ENCODE measurements at regions of chr14 and their contacts with region 1.

Region 1: GRCh38 chr14:92352158-92352985 is 29.4 kb downstream of the SLC24A4 start:
- DNase-seq: peak; percentile 10 to 71
- H3K4me3 ChIP-seq: no peak overlapping the region
- H3K27ac ChIP-seq: no peak overlapping the region
- H3K4me1 ChIP-seq: no peaks in the 10 kb centered on the region
- H3K27me3 ChIP-seq: no peaks in the 10 kb centered on the region
- CTCF ChIP-seq: peak in 2 of 3 experiments; percentile 67 to 77; a peak in 3 of 4 replicates
- EP300 ChIP-seq: no peak
- POLR2A ChIP-seq: no peak
- RAD21 ChIP-seq: peak; percentile 77 to 78

Region 2: DNA sequence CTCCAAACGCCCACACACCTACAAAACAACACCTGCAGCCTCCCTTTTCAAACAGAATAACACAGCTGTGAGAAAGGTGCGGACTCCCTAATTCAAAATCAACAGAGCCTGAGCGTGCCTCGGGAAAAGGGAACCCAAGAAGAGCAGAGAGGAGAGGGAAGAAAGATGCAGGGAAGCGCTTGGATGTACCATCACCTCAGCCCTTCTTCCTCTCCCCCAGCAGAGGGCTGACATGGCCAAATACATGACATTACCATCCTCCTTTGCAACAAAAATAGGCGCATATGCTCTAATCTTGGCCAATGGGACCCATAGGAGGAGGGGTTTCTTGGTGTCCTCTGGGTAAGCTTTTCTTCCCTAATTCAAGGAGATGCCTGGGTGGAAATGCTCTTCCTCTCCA is 152.6 kb before region 1 on chr14:
- CTCF ChIA-PET with region 1: interaction called, 13 read pairs
- POLR2A ChIA-PET with region 1: no interaction called
- DNase-seq: no peak
- H3K4me3 ChIP-seq: peak overlapping the region in 1 of 4 experiments; percentile 47; a peak in 4 of 8 replicates
- H3K27ac ChIP-seq: no peak overlapping the region
- H3K4me1 ChIP-seq: peaks cover 0 to 10% (median 2%) of the 10 kb centered on the region in 4 experiments; a peak in 3 of 7 replicates
- H3K27me3 ChIP-seq: no peaks in the 10 kb centered on the region; a peak in 3 of 7 replicates
- CTCF ChIP-seq: peak; percentile 17 to 41 (median 23); a peak in 3 of 4 replicates
- EP300 ChIP-seq: no peak
- POLR2A ChIP-seq: no peak
- RAD21 ChIP-seq: peak in 1 of 2 experiments; percentile 44; a peak in 2 of 4 replicates

Region 3: DNA sequence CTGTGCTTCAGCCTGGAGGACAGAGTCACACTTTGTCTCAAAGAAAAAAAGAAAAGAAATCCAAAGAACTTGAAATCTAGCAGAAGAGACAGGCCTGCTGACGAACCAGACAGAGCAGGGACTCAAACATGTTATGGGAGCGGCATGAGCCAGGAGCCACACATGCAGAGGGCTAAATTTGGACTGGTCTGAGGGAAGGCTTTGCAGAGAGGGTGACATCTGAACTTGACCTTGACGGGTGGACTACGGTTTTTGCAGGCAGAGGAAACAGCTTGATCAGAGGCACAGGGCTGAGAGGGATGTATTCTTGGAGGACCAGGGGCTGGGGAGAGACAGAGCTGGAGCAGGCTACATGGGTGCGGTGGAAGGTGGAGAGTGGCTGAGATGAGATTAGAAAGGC is 49.9 kb before region 1 on chr14:
- CTCF ChIA-PET with region 1: interaction called, 11 read pairs
- POLR2A ChIA-PET with region 1: no interaction called
- DNase-seq: no peak
- H3K4me3 ChIP-seq: no peak overlapping the region
- H3K27ac ChIP-seq: no peak overlapping the region
- H3K4me1 ChIP-seq: no peaks in the 10 kb centered on the region
- H3K27me3 ChIP-seq: no peaks in the 10 kb centered on the region
- CTCF ChIP-seq: no peak
- EP300 ChIP-seq: no peak
- POLR2A ChIP-seq: no peak
- RAD21 ChIP-seq: no peak

Region 4: DNA sequence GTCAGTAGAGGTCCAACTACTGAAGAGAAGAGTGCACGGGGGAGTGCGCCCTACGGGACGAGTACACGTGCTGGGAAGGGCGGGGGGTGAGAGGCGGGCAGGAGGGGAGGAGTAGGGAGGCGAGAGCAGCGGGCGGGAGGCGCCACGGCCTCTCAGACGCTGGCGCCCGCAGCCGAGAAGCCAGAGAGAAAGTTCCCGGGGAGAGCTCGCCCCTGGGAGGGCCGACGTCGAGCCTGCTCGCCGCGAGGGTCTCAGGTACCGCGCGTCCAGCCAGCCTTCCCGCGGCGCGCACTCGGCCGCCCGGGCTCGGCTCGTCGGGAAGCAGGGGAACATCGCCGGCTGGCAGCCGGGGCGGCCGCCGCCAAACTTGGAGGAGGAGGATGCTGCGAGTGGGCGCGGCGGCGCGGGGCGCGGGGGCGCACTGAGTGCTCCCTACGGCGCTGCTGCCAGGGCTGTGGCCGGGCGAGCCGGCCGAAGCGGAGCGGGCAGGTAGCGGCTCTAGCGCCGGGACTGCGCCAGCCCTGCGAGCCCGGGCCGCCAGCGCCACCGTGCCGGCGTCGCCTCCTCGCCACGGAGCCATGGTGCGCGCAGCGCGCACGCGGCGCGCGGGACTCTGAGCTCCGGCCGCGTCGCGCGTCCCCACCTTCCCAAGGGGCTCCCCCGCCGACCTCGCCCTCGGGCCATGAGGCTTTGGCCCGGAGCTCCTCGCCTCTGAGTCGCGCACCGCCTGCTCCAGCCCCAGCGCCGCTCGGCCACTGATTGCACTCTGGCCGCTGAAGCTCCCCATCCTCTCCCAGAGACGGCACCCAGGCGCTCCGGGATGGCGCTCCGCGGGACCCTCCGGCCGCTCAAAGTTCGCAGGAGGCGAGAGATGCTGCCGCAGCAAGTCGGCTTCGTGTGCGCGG is 29.1 kb before region 1 on chr14 and contains the start of gene SLC24A4:
- CTCF ChIA-PET with region 1: interaction called, 52 read pairs
- POLR2A ChIA-PET with region 1: no interaction called
- DNase-seq: peak in 1 of 2 experiments; percentile 76
- H3K4me3 ChIP-seq: peak within 1 kb of the TSS; percentile 43 to 62 (median 50)
- H3K27ac ChIP-seq: no peak within 1 kb of the TSS
- H3K4me1 ChIP-seq: peaks cover 0 to 5% (median 1%) of the 10 kb centered on the region in 4 experiments; a peak in 5 of 7 replicates
- H3K27me3 ChIP-seq: peaks cover 33 to 65% (median 57%) of the 10 kb centered on the region in 4 experiments
- CTCF ChIP-seq: 0 out of 4 replicates have a peak, but pooled peaks of 1 of the 3 experiments have one; percentile 5
- EP300 ChIP-seq: no peak
- POLR2A ChIP-seq: no peak
- RAD21 ChIP-seq: no peak; a peak in 1 of 4 replicates
- total RNA-seq, gene SLC24A4: 0.44 and 0.89 TPM in 2 replicates

Region 5: GRCh38 chr14:92340931-92341330 is 11.4 kb before region 1 on chr14:
- CTCF ChIA-PET with region 1: interaction called, 59 read pairs
- POLR2A ChIA-PET with region 1: no interaction called
- DNase-seq: no peak
- H3K4me3 ChIP-seq: no peak overlapping the region
- H3K27ac ChIP-seq: no peak overlapping the region
- H3K4me1 ChIP-seq: peaks cover 0 to 4% (median 1%) of the 10 kb centered on the region in 4 experiments; a peak in 2 of 7 replicates
- H3K27me3 ChIP-seq: no peaks in the 10 kb centered on the region
- CTCF ChIP-seq: no peak
- EP300 ChIP-seq: no peak
- POLR2A ChIP-seq: no peak
- RAD21 ChIP-seq: no peak

Region 6: GRCh38 chr14:92362781-92363235 is 10.4 kb after region 1 on chr14:
- CTCF ChIA-PET with region 1: interaction called, 26 read pairs
- POLR2A ChIA-PET with region 1: no interaction called
- DNase-seq: no peak
- H3K4me3 ChIP-seq: no peak overlapping the region
- H3K27ac ChIP-seq: no peak overlapping the region
- H3K4me1 ChIP-seq: no peaks in the 10 kb centered on the region
- H3K27me3 ChIP-seq: no peaks in the 10 kb centered on the region
- CTCF ChIP-seq: no peak
- EP300 ChIP-seq: no peak
- POLR2A ChIP-seq: no peak
- RAD21 ChIP-seq: no peak

Region 7: GRCh38 chr14:92495035-92495434 is 142.7 kb after region 1 on chr14:
- CTCF ChIA-PET with region 1: no interaction called
- POLR2A ChIA-PET with region 1: no interaction called
- DNase-seq: no peak
- H3K4me3 ChIP-seq: no peak overlapping the region
- H3K27ac ChIP-seq: no peak overlapping the region
- H3K4me1 ChIP-seq: peaks cover 0 to 7% (median 2%) of the 10 kb centered on the region in 4 experiments; a peak in 5 of 7 replicates
- H3K27me3 ChIP-seq: peaks cover 0 to 2% (median 0%) of the 10 kb centered on the region in 4 experiments; a peak in 2 of 7 replicates
- CTCF ChIP-seq: no peak
- EP300 ChIP-seq: no peak
- POLR2A ChIP-seq: no peak
- RAD21 ChIP-seq: no peak